GM18951 (cell line): ENCODE measurements at regions of chr16 and their contacts with region 1.

Region 1: DNA sequence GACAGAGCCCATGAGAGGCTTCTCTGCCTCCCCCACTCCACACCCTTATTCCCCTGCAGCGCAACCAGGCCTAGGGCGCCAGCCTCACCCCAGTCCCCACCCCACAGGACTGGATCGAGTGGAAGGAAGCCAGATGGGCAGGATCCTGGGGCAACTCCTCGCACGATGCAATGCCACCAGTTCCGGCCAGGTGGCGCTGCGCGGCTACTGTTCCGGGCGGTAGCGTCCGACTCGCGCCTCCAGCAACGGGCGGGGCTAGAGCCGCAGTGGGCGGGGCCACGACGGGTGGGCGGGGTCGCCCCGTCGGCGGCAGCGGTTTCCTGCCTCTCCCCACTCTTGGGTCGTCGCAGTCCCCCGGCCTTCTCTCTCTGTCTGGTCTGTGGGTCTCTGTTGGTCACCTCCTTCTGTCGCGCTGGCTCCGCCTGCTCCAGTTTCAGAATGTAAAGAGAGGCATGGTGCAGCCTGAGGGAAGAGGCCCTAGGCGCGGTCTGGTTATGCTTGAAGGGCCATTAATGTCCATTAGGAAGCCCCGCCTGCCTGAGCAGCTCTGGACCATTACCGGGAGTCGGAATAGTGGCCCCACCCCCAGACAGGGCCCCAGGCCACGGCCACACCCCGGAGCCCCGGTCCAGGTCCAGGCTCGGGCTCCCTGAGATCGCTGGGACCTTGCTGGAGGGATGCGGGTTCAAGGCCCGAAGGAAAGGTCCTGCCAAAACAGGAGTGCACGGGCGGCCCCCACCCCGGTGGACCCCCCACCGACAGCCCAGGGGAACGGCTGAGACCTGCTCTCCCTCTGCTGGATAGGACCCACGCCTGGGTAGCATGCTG is 3.4 kb upstream of the NHERF2 start:
- POLR2A ChIP-seq: peak; percentile 38

Region 2: GRCh38 chr16:2142942-2143877 is 119.9 kb after region 1 on chr16:
- in situ Hi-C with region 1: loop called (anchors 5 kb)
- POLR2A ChIP-seq: no peak

Region 3: DNA sequence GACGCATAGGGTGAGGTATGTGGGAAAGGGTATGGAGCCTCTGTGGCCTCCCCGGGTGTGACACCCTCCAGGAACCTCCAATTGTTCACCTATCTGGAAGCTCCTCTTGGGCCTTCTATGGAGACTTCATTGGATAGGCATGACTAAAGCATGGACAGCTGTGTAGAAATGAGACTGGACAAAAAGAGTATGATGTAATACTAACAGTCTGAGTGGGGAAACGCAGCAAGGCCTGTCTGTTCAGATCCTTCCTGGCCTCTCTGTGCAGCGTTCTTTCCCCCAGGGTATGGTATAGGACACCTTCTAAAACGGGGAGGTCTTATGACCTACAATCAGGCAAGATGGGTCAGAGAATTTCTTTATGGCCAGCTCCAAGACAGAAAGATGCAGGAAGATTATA is 375.2 kb after region 1 on chr16:
- in situ Hi-C with region 1: no loop called
- POLR2A ChIP-seq: no peak